Esophagus muscularis mucosa (tissue), 4 donors: ENCODE measurements at regions of chr9 and their contacts with region 1.

Region 1: GRCh38 chr9:126860077-126860756 is at the start of gene ZBTB34:
- DNase-seq: no peak
- H3K4me3 ChIP-seq: peak within 1 kb of the TSS; percentile 90 to 99 (median 94)
- H3K27ac ChIP-seq: peak within 1 kb of the TSS; percentile 83 to 96 (median 94)
- H3K4me1 ChIP-seq: peaks cover 28 to 47% (median 39%) of the 10 kb centered on the region in 4 donors
- H3K27me3 ChIP-seq: no peaks in the 10 kb centered on the region
- CTCF ChIP-seq: peak in 2 of 3 experiments; percentile 99 to 100
- EP300 ChIP-seq: no peak
- POLR2A ChIP-seq: no peak
- total RNA-seq, gene ZBTB34: 10.4 to 16.8 (median 12.6) TPM

Region 2: GRCh38 chr9:126914458-126915280 is 54.5 kb after region 1 on chr9 and contains the start of gene RALGPS1:
- intact Hi-C with region 1: loop called (anchors 5 kb)
- DNase-seq: peak; percentile 98
- H3K4me3 ChIP-seq: peak within 1 kb of the TSS; percentile 67 to 92 (median 76)
- H3K27ac ChIP-seq: peak within 1 kb of the TSS; percentile 81 to 86 (median 84)
- H3K4me1 ChIP-seq: peaks cover 10 to 16% (median 13%) of the 10 kb centered on the region in 4 donors
- H3K27me3 ChIP-seq: no peaks in the 10 kb centered on the region
- CTCF ChIP-seq: no peak
- EP300 ChIP-seq: no peak
- POLR2A ChIP-seq: no peak
- total RNA-seq, gene RALGPS1: 4.6 to 11.9 (median 10.0) TPM